Dorsolateral prefrontal cortex (tissue), 120 donors: ENCODE measurements at regions of chr11 and their contacts with region 1.

Region 1: DNA sequence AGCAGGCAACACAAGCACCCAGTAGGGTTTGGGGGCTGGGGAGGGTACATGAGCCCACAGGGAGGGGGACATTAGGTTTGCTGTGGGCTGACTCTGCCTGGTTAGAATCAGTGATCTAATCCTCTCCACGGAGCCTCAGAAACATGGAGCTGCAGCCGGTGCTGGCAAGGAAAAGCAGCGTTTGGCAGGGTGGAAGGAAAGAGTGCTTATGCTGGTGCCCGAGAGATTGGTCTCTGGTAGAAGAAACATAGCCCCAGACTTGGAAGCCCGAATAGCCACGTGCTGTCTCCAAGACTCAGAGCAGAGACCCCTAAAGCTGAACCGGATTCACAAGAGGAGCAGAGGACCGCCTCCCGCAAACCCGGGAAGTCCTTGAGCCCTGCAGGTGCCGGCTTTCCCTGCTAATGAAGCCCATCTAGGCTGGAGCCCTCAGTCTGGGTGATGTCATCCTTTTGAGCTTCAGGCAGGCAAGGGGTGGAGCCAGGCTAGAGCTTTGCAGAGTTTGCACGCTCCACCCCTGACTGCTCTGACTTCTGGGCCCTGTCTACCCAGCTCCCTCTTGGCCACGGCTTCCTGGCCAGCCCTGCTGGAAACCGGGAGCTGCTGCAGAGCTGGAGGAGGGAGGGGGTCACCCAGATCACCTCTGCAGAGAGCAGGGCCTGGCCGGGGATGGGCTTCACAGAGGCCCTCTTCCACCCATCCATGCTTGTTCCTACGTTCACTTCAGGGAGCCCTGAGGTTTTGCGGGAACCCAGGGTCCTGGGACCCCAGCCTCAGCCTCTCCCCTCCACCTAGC is 35.0 kb upstream of the JAM3 start:
- DNase-seq: peak in 9 of 10 donors; percentile 67 to 91 (median 83)
- H3K4me3 ChIP-seq: peak overlapping the region in 57 of 59 donors; percentile 0 to 60 (median 41)
- H3K27ac ChIP-seq: peak overlapping the region; percentile 5 to 98 (median 86)
- H3K27me3 ChIP-seq: no peaks in the 10 kb centered on the region
- CTCF ChIP-seq: peak in 1 of 56 donors; percentile 6

Region 2: GRCh38 chr11:133947321-133947756 is 86.6 kb before region 1 on chr11:
- intact Hi-C with region 1: loop called in 1 of 2 experiments (anchors 5 kb)
- DNase-seq: peak in 6 of 10 donors; percentile 40 to 72 (median 66)
- H3K4me3 ChIP-seq: peak overlapping the region in 56 of 59 donors; percentile 7 to 78 (median 40)
- H3K27ac ChIP-seq: peak overlapping the region in 50 of 59 donors; percentile 2 to 96 (median 66)
- H3K27me3 ChIP-seq: peaks cover 0 to 68% (median 3%) of the 10 kb centered on the region in 45 donors
- CTCF ChIP-seq: peak in 52 of 56 donors; percentile 16 to 66 (median 42)

Region 3: DNA sequence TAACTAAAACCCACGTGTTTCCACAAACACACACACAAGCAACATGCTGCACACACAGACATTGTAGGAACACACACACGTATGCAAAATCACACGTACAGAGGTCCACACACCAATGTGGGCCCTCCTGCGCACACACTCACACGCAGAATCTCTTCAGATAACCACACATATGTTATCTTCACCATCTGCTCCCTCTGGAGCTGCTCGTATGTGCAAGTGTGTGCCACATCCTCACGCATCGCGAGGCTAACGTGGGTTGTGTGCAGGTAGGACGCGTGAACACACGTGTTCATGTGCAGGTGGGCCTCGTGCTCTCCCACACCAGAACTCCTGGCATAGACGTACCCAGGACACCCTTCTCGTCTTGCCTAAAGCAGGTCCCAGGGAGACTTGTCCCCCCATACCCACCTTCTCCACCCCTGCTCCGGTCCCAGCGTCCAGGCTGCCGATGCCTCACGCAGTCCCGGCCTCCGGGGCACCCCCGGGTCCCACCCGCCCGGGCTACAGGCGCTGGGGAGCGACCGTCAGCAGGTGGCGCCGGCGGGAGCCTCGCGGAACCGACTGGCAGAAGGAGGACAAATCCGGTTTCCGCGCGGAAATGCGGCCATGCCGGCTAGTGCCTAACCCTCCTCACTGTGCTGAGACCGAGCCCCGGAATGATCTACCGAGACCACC is 66.8 kb before region 1 on chr11:
- intact Hi-C with region 1: loop called in 1 of 2 experiments (anchors 5 kb)
- DNase-seq: peak in 8 of 10 donors; percentile 42 to 84 (median 71)
- H3K4me3 ChIP-seq: peak overlapping the region in 52 of 59 donors; percentile 15 to 57 (median 41)
- H3K27ac ChIP-seq: peak overlapping the region in 25 of 59 donors; percentile 1 to 54 (median 28)
- H3K27me3 ChIP-seq: peaks cover 0 to 14% (median 0%) of the 10 kb centered on the region in 45 donors
- CTCF ChIP-seq: peak in 55 of 56 donors; percentile 19 to 71 (median 57)